Psoas muscle (tissue), 8 donors: ENCODE measurements at regions of chr2 and their contacts with region 1.

Region 1: GRCh38 chr2:187581125-187581896 is 27.1 kb upstream of the TFPI start:
- DNase-seq: no peak
- ATAC-seq: peak in 2 of 4 donors; percentile 47 to 80
- H3K4me3 ChIP-seq: peak overlapping the region; percentile 45
- H3K27ac ChIP-seq: no peak overlapping the region
- H3K4me1 ChIP-seq: peaks cover 4% of the 10 kb centered on the region
- H3K27me3 ChIP-seq: no peaks in the 10 kb centered on the region
- CTCF ChIP-seq: peak; percentile 72

Region 2: GRCh38 chr2:187499941-187500532 is 81.3 kb before region 1 on chr2:
- intact Hi-C with region 1: loop called (anchors 2 kb)
- DNase-seq: peak; percentile 42 to 48
- ATAC-seq: peak; percentile 78 to 92 (median 82)
- H3K4me3 ChIP-seq: no peak overlapping the region
- H3K27ac ChIP-seq: no peak overlapping the region
- H3K4me1 ChIP-seq: peaks cover 4% of the 10 kb centered on the region
- H3K27me3 ChIP-seq: no peaks in the 10 kb centered on the region
- CTCF ChIP-seq: peak; percentile 88

Region 3: GRCh38 chr2:187527262-187527661 is 54.0 kb before region 1 on chr2:
- intact Hi-C with region 1: no loop called
- DNase-seq: no peak
- ATAC-seq: no peak
- H3K4me3 ChIP-seq: no peak overlapping the region
- H3K27ac ChIP-seq: no peak overlapping the region
- H3K4me1 ChIP-seq: peaks cover 6% of the 10 kb centered on the region
- H3K27me3 ChIP-seq: no peaks in the 10 kb centered on the region
- CTCF ChIP-seq: no peak

Region 4: GRCh38 chr2:187842978-187843847 is 261.9 kb after region 1 on chr2:
- intact Hi-C with region 1: loop called (anchors 5 kb)
- DNase-seq: no peak
- ATAC-seq: no peak
- H3K4me3 ChIP-seq: no peak overlapping the region
- H3K27ac ChIP-seq: no peak overlapping the region
- H3K4me1 ChIP-seq: no peaks in the 10 kb centered on the region
- H3K27me3 ChIP-seq: no peaks in the 10 kb centered on the region
- CTCF ChIP-seq: peak; percentile 61

Region 5: DNA sequence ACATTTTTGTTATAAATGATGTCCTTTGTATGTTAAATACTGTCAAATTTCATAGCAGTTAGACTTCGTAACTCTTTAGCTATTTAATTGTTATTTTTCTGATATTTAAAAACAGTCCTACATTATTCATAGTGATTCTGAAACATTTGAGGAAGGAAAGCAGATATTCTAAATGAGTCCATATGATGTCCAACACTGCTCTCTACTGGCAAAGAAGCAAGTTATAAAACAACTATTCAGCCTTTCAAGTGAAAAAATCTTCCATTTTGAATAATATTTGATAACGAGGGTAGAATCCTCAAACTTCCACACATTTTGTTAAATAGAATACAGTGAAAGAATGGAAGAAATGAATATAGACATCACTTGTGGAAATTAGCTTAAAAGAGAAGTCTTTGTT is 931.1 kb after region 1 on chr2:
- intact Hi-C with region 1: loop called (anchors 10 kb)
- DNase-seq: no peak
- ATAC-seq: no peak
- H3K4me3 ChIP-seq: no peak overlapping the region
- H3K27ac ChIP-seq: no peak overlapping the region
- H3K4me1 ChIP-seq: no peaks in the 10 kb centered on the region
- H3K27me3 ChIP-seq: no peaks in the 10 kb centered on the region
- CTCF ChIP-seq: peak; percentile 56

Region 6: DNA sequence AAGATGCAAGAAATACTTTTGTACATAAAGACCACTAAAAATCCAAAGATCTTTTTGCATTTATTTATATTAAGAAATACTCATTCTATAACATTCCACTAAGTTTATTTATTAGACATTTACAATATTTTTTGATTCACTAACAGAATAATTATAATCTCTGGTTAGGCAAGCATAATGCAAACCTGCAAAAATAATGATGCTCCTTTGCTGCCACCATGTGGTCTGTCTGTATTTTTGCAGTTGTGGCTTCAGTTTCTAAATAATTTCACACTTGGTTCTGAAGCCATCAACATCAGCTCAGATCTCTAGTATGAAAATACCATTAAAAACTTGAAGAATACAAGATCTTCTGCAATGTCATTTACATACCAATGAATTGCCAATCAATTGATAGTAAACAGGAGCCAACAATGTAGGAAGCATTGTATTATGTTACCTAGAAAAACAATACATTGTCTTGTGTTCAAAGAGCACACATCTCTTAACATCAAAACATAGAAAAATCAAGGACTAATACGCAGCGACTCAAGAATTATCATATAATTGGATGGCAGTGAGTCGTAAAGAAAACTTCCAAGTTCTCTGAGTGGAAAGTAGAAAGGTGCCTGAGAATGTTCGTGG is 1831.1 kb after region 1 on chr2:
- intact Hi-C with region 1: loop called in 1 of 2 experiments (anchors 10 kb)
- DNase-seq: no peak
- ATAC-seq: peak; percentile 59 to 90 (median 70)
- H3K4me3 ChIP-seq: no peak overlapping the region
- H3K27ac ChIP-seq: no peak overlapping the region
- H3K4me1 ChIP-seq: no peaks in the 10 kb centered on the region
- H3K27me3 ChIP-seq: no peaks in the 10 kb centered on the region
- CTCF ChIP-seq: peak; percentile 78